Activated T-helper 1 cell treated with anti-CD3 and anti-CD28 coated beads, Interleukin-12 subunit alpha, Interleukin-12 subunit beta, Interleukin-2, Interleukin-4 antibody, amounts not matched to agents 30 ng/mL and 10 ng/mL and 1 ng/mL, durations not matched to agents 14 hours and 24 hours and 36 hours (primary cell): ENCODE measurements at regions of chr1 and their contacts with region 1.

Region 1: GRCh38 chr1:8560611-8561544 is 243.0 kb downstream of the SLC45A1 start:
- DNase-seq: no peak
- H3K4me3 Mint-ChIP-seq: peak overlapping the region; percentile 32
- H3K27ac Mint-ChIP-seq: peak overlapping the region; percentile 78
- H3K4me1 Mint-ChIP-seq: peaks cover 57% of the 10 kb centered on the region
- H3K27me3 Mint-ChIP-seq: no peaks in the 10 kb centered on the region

Region 2: GRCh38 chr1:8540261-8540941 is 20.5 kb before region 1 on chr1:
- intact Hi-C with region 1: loop called (anchors 1 kb)
- DNase-seq: no peak
- H3K4me3 Mint-ChIP-seq: peak overlapping the region; percentile 65
- H3K27ac Mint-ChIP-seq: peak overlapping the region; percentile 91
- H3K4me1 Mint-ChIP-seq: peaks cover 51% of the 10 kb centered on the region
- H3K27me3 Mint-ChIP-seq: no peaks in the 10 kb centered on the region

Region 3: DNA sequence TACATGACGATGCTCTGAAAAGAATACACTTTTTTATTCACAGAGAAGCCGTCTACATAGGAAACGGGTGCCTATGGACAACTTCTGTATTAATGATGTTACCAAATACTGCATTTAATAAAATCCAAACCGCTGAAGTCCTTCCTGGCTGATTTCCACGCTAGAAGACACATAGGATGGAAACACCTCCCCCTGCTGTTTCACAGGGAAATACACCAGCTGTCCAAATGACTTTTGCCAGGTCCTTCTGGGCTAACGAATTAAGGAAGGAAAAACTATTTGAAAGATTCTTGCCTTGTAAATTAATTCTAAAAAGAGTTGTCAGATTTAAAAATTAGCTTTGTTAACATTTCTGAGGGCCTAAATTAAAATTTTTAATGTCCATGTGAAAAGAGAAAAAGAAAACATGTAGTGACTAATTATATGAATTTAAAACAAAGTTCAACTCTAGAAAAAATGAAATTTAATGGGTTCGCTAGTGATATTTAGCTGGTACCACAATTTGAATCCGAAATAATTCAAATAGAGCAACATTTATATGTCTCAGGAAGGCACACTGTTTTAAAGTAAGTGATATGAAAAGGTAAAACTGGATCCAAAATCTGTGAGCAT is 110.5 kb after region 1 on chr1:
- intact Hi-C with region 1: loop called (anchors 1 kb)
- DNase-seq: no peak
- H3K4me3 Mint-ChIP-seq: no peak overlapping the region
- H3K27ac Mint-ChIP-seq: no peak overlapping the region
- H3K4me1 Mint-ChIP-seq: peaks cover 49% of the 10 kb centered on the region
- H3K27me3 Mint-ChIP-seq: no peaks in the 10 kb centered on the region

Region 4: GRCh38 chr1:8727809-8728213 is 166.9 kb after region 1 on chr1:
- intact Hi-C with region 1: loop called (anchors 1 kb)
- DNase-seq: no peak
- H3K4me3 Mint-ChIP-seq: no peak overlapping the region
- H3K27ac Mint-ChIP-seq: no peak overlapping the region
- H3K4me1 Mint-ChIP-seq: peaks cover 24% of the 10 kb centered on the region
- H3K27me3 Mint-ChIP-seq: no peaks in the 10 kb centered on the region

Region 5: DNA sequence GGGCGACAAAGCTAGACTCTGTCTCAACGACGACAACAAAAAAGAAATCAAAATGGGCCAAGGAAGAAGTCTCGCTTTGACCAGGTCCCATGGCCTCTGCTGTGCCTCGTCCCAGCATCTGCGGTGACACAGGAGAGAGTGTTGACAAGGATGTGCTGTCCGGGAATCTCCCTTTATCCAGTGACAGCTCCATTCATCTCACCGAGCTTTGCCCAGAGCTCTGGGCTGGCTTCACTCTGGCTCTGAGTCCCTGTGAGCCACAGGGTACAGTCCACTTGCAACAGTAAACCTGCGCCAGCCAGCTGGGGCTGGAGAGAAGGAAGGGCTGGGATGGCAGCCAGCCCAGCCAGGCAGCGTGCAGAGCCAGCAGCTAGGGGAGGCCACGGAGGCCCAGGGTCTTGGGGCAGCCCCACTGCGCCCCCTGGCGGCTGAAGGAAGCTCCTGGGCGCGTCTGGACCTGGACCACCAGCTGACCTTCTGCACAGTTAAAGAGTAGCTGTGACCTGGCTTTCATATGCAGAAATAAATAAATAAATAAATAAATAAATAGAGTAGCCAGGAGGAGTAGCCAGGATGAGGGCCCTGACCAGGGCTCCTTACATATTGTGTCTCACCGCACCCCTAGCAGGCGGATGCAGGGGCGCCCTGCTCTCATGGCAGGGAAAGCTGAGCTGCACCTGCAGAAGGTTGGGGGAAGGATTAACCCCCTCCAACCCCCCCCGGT is 287.9 kb after region 1 on chr1:
- intact Hi-C with region 1: loop called (anchors 1 kb)
- DNase-seq: peak; percentile 53
- H3K4me3 Mint-ChIP-seq: no peak overlapping the region
- H3K27ac Mint-ChIP-seq: no peak overlapping the region
- H3K4me1 Mint-ChIP-seq: no peaks in the 10 kb centered on the region
- H3K27me3 Mint-ChIP-seq: peaks cover 5% of the 10 kb centered on the region